HEK293 (cell line): ENCODE measurements at regions of chr10 and their contacts with region 1.

Region 1: GRCh38 chr10:71429929-71430328 is 33.2 kb downstream of the CDH23 start:
- H3K4me3 ChIP-seq: no peak overlapping the region
- H3K27ac ChIP-seq: no peak overlapping the region
- H3K4me1 ChIP-seq: no peaks in the 10 kb centered on the region
- CTCF ChIP-seq: peak; percentile 43; the same call in 1 of the 2 replicates

Region 2: GRCh38 chr10:71419002-71419540 is 10.9 kb before region 1 on chr10:
- CTCF ChIA-PET with region 1: interaction called, 11 read pairs
- POLR2A ChIA-PET with region 1: no interaction called
- H3K4me3 ChIP-seq: no peak overlapping the region
- H3K27ac ChIP-seq: no peak overlapping the region
- H3K4me1 ChIP-seq: no peaks in the 10 kb centered on the region
- CTCF ChIP-seq: no peak